ENCODE measurements at regions of chr22 and their contacts with region 1.

Region 1: GRCh38 chr22:30253205-30253852 is 6.8 kb upstream of the LIF start:
- DNase-seq: no peak
- H3K4me3 ChIP-seq: peak overlapping the region in 1 of 2 donors; percentile 39
- H3K27ac ChIP-seq: no peak overlapping the region
- H3K4me1 ChIP-seq: peaks cover 6 to 14% of the 10 kb centered on the region in 2 donors
- H3K27me3 ChIP-seq: no peaks in the 10 kb centered on the region
- CTCF ChIP-seq: no peak

Region 2: GRCh38 chr22:29811377-29812021 is 441.8 kb before region 1 on chr22:
- intact Hi-C with region 1: no loop called
- DNase-seq: no peak
- H3K4me3 ChIP-seq: no peak overlapping the region
- H3K27ac ChIP-seq: no peak overlapping the region
- H3K4me1 ChIP-seq: no peaks in the 10 kb centered on the region
- H3K27me3 ChIP-seq: no peaks in the 10 kb centered on the region
- CTCF ChIP-seq: no peak

Region 3: DNA sequence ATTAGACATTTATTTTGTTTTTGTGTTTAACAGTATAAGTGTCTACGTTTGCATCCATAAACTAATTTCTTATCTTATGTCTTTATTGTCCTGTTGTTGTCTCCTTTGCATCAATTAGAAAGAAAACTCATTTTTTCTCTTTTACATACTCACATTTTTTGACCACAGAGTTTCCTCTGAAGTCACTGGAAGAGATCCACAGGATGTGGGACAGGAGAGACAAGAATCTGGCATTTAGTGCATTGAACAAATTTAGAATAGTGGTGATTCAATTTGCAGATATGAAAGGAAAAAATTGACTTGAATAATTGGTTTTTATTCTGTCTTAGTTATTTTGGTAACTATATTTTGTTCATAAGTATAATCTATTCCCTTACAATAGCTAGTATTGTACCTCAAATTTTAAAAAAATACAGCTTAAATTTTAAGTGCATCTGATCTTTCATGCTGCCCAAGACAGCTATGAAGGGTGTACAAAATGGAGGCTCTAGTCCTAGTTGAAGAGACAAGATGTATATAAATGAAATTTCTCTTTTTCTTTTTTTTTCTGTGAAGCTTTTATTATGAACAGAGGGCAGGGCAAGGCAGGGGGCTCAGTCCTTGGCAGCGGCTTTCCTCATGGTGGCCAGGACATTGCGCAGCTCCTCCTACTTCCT is 148.7 kb before region 1 on chr22:
- intact Hi-C with region 1: loop called (anchors 1 kb)
- DNase-seq: no peak
- H3K4me3 ChIP-seq: no peak overlapping the region
- H3K27ac ChIP-seq: no peak overlapping the region
- H3K4me1 ChIP-seq: no peaks in the 10 kb centered on the region
- H3K27me3 ChIP-seq: no peaks in the 10 kb centered on the region
- CTCF ChIP-seq: no peak

Region 4: DNA sequence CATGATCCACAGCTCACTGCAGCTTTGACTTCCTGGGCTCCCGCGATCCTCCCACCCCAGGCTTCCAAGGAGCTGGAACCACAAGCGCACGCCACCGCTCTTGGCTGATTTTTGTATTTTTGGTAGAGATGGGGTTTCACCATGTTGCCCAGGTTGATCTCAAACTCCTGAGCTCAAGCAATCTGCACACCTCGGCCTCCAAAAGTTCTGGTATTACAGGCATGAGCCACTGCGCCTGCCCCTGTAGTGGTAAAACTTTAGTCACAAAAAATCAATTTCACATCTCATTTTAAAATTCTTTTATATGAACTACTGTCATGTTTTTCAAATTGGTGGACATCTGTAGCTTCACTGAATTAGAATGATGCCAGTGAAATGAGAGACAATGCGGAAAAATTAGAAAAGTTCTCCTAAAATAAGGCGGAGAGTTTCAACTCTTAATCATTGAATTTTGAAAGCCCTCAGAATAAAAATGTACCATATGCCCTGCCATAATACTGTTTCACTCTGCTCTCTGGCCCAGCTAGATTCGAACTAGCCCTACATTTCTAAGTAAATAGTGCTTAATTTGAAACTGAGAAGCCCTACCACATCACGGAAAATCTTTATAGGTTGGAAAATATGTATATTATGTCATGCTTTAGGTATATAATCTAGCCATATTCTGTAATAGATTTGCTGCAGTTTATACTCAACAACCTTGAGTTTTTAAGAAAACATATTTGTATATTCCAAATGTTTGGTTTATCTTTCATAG is 94.4 kb before region 1 on chr22:
- intact Hi-C with region 1: no loop called
- DNase-seq: no peak
- H3K4me3 ChIP-seq: no peak overlapping the region
- H3K27ac ChIP-seq: no peak overlapping the region
- H3K4me1 ChIP-seq: no peaks in the 10 kb centered on the region
- H3K27me3 ChIP-seq: no peaks in the 10 kb centered on the region
- CTCF ChIP-seq: no peak

Measured in ascending aorta (tissue), 2 donors.